GM12878 (cell line): ENCODE measurements at regions of chr10 and their contacts with region 1.

Region 1: GRCh38 chr10:24518981-24519597 is 204.6 kb downstream of the ARHGAP21 start:
- DNase-seq: no peak
- ATAC-seq: peak; percentile 68
- H3K4me3 ChIP-seq: no peak overlapping the region
- H3K27ac ChIP-seq: no peak overlapping the region
- H3K4me1 ChIP-seq: no peaks in the 10 kb centered on the region
- H3K27me3 ChIP-seq: no peaks in the 10 kb centered on the region
- CTCF ChIP-seq: peak; percentile 69 to 80 (median 77)
- EP300 ChIP-seq: no peak
- POLR2A ChIP-seq: no peak
- RAD21 ChIP-seq: peak; percentile 68

Region 2: GRCh38 chr10:24209946-24210491 is 309.1 kb before region 1 on chr10:
- CTCF ChIA-PET with region 1: interaction called, 12 read pairs
- POLR2A ChIA-PET with region 1: no interaction called
- RAD21 ChIA-PET with region 1: interaction called, 3 read pairs
- SMC1A ChIA-PET with region 1: interaction called, 3 read pairs
- in situ Hi-C with region 1: no loop called
- intact Hi-C with region 1: no loop called
- DNase-seq: peak; percentile 82
- ATAC-seq: peak; percentile 75
- H3K4me3 ChIP-seq: peak overlapping the region; percentile 62
- H3K27ac ChIP-seq: peak overlapping the region; percentile 62
- H3K4me1 ChIP-seq: peaks cover 9% of the 10 kb centered on the region
- H3K27me3 ChIP-seq: no peaks in the 10 kb centered on the region
- CTCF ChIP-seq: no peak
- EP300 ChIP-seq: peak; percentile 74 to 87; a peak in 2 of 4 replicates
- POLR2A ChIP-seq: no peak
- RAD21 ChIP-seq: no peak

Region 3: DNA sequence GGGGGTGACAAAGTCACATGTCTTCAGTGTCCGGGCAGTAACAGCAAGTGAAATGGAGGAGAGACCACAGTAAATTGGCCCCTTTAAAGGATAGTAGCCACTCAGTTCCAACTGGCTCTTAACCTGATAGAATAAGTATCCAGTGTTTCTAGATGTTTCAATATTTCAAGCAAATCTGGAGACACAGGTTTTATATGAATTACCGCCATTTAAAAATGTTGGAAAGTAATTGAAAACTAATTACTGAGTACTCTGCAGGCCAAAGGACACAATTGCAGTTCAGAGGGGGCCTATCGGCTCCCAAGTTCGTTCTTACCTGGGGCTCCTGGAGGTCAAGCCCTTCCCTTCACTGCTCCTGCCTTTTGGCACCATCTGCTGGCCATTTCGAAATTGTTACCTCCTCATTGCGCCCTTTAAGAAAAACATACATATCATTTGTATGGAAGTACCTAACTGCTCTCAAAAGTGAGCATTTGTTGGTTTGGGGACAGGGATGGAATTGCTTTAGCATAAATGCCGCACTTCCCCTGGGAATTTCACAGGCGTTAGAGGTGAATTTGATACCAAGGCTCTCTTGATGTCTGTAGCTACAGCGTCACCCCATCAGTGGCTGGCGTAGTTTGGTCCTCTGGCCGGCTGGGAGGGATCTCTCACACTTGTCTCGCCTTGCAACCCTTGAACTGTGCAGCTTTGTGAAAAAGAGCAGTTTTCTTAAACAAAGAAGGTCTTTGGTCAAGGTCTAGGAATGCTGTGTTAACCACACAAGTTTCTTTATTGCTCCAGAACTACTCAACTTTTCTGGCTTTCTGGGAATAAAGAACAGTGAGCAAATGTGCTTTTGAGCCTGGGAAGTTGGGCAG is 15.4 kb before region 1 on chr10:
- CTCF ChIA-PET with region 1: interaction called, 87 read pairs
- POLR2A ChIA-PET with region 1: no interaction called
- RAD21 ChIA-PET with region 1: interaction called, 3 read pairs
- SMC1A ChIA-PET with region 1: interaction called, 53 read pairs
- in situ Hi-C with region 1: no loop called
- intact Hi-C with region 1: no loop called
- DNase-seq: peak; percentile 36
- ATAC-seq: peak; percentile 93
- H3K4me3 ChIP-seq: no peak overlapping the region
- H3K27ac ChIP-seq: no peak overlapping the region
- H3K4me1 ChIP-seq: no peaks in the 10 kb centered on the region
- H3K27me3 ChIP-seq: no peaks in the 10 kb centered on the region; a peak in 1 of 4 replicates
- CTCF ChIP-seq: peak; percentile 50 to 73 (median 60); a peak in 5 of 6 replicates
- EP300 ChIP-seq: no peak
- POLR2A ChIP-seq: no peak
- RAD21 ChIP-seq: peak; percentile 92

Region 4: GRCh38 chr10:24533981-24534380 is 14.9 kb after region 1 on chr10:
- CTCF ChIA-PET with region 1: interaction called, 30 read pairs
- POLR2A ChIA-PET with region 1: no interaction called
- RAD21 ChIA-PET with region 1: interaction called, 3 read pairs
- SMC1A ChIA-PET with region 1: no interaction called
- in situ Hi-C with region 1: no loop called
- intact Hi-C with region 1: no loop called
- DNase-seq: no peak
- ATAC-seq: no peak
- H3K4me3 ChIP-seq: no peak overlapping the region
- H3K27ac ChIP-seq: no peak overlapping the region
- H3K4me1 ChIP-seq: no peaks in the 10 kb centered on the region
- H3K27me3 ChIP-seq: no peaks in the 10 kb centered on the region
- CTCF ChIP-seq: no peak
- EP300 ChIP-seq: no peak
- POLR2A ChIP-seq: no peak
- RAD21 ChIP-seq: no peak

Region 5: DNA sequence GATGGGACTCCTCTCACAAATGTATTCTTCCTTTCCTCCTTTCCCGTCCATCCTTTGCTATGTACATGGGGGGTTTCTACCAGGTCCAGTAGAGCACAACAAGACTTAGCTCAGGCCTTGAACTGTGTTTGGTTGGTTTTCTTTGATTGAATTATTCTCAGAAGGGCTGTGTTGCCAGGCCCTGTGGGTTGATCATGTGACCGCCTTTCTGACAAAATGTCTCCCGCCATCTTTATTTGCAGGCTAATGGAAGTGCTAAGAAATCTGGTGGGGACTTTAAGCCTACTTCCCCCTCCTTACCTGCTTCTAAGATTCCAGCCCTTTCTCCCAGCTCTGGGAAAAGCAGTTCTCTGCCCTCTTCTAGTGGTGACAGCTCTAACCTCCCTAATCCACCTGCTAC is 26.5 kb after region 1 on chr10:
- CTCF ChIA-PET with region 1: interaction called, 12 read pairs
- POLR2A ChIA-PET with region 1: no interaction called
- RAD21 ChIA-PET with region 1: no interaction called
- SMC1A ChIA-PET with region 1: interaction called, 3 read pairs
- in situ Hi-C with region 1: no loop called
- intact Hi-C with region 1: no loop called
- DNase-seq: no peak
- ATAC-seq: no peak
- H3K4me3 ChIP-seq: no peak overlapping the region
- H3K27ac ChIP-seq: no peak overlapping the region
- H3K4me1 ChIP-seq: no peaks in the 10 kb centered on the region
- H3K27me3 ChIP-seq: no peaks in the 10 kb centered on the region
- CTCF ChIP-seq: no peak
- EP300 ChIP-seq: no peak
- POLR2A ChIP-seq: no peak
- RAD21 ChIP-seq: no peak